Aorta (tissue), 5 donors: ENCODE measurements at regions of chr2 and their contacts with region 1.

Region 1: GRCh38 chr2:12709207-12709522 is 7.6 kb upstream of the TRIB2 start:
- DNase-seq: no peak
- ATAC-seq: no peak
- H3K4me3 ChIP-seq: no peak overlapping the region
- H3K27ac ChIP-seq: no peak overlapping the region
- H3K4me1 ChIP-seq: no peaks in the 10 kb centered on the region
- H3K27me3 ChIP-seq: no peaks in the 10 kb centered on the region

Region 2: DNA sequence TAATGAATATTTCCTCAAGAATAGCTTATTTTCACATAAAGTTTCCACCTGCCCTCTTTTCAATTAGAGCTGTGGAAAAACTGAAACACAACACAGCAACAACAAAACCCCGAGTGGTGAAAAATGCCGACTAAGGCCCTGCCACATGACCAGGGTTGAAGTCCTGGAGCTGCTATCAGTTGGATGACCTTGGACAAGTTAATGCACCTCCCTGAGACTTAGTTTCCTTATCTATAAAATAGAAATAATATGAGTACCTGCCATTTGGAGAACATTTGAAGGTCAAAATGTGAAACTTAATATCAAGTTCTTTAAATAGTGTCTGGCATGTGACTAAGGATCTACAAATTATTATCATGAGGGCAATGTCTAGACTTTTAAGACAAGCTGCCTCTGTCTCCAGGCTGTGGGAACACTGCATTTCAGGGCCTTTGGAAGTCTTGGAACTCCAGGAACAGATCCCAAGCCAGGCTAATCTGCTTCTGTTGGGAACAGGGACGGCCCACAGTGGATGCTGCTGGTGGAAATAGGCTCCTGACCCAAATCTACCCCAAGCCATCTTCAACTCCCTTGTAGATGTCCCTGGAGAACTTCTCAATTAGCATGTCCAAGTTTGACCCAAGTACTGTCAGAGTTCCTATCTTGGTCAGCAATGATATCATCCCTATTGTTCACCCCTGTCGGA is 34.4 kb before region 1 on chr2:
- intact Hi-C with region 1: loop called in 1 of 2 experiments (anchors 5 kb)
- DNase-seq: no peak
- ATAC-seq: no peak
- H3K4me3 ChIP-seq: no peak overlapping the region
- H3K27ac ChIP-seq: peak overlapping the region in 1 of 2 donors; percentile 23
- H3K4me1 ChIP-seq: no peaks in the 10 kb centered on the region
- H3K27me3 ChIP-seq: no peaks in the 10 kb centered on the region

Region 3: DNA sequence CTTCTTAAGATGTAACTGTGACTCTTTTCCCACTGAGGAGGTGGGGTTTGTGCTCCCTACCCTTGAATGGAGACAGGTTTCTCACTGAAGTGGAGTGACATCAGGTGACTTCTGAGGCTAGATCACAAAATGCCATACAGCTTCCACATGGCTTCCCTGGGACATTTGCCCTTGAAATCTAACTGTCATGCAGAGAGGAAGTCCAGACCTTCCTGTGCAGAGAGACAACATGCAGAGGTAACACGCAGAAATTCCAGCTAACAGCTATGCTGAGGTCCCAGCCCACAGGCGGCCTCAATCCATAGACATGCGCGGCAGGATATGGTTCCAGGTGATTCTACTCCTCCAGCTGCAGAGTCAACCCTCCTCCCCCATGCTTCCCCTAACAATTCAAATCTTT is 126.6 kb after region 1 on chr2:
- intact Hi-C with region 1: no loop called
- DNase-seq: no peak
- ATAC-seq: no peak
- H3K4me3 ChIP-seq: no peak overlapping the region
- H3K27ac ChIP-seq: no peak overlapping the region
- H3K4me1 ChIP-seq: no peaks in the 10 kb centered on the region
- H3K27me3 ChIP-seq: no peaks in the 10 kb centered on the region